Colonic mucosa (tissue), 4 donors: ENCODE measurements at regions of chr11 and their contacts with region 1.

Region 1: DNA sequence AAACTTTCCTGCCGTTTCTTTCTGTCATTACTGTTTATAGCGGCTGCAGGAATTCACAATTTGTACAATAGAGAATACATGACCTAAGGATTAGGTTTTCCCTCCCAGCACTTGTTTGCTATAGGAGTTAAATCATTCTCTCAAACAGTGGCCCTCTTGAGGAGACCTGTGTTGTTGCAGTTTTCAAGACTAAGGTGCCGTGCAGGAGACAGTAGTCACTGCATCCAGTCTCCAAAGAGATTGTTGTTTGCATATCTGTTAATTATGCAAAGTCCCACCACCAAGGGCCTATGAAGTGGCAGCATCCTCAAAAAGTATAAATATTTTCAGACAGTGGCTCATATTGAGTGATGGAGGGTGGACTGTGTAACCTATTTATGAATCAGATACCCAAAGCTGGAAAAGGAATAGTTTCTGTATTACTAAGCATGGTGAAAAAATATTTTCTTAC is 2.3 kb downstream of the PRSS23 start:
- DNase-seq: no peak
- H3K4me3 ChIP-seq: no peak overlapping the region
- H3K27ac ChIP-seq: no peak overlapping the region
- H3K4me1 ChIP-seq: no peaks in the 10 kb centered on the region
- H3K27me3 ChIP-seq: no peaks in the 10 kb centered on the region
- CTCF ChIP-seq: peak; percentile 45

Region 2: DNA sequence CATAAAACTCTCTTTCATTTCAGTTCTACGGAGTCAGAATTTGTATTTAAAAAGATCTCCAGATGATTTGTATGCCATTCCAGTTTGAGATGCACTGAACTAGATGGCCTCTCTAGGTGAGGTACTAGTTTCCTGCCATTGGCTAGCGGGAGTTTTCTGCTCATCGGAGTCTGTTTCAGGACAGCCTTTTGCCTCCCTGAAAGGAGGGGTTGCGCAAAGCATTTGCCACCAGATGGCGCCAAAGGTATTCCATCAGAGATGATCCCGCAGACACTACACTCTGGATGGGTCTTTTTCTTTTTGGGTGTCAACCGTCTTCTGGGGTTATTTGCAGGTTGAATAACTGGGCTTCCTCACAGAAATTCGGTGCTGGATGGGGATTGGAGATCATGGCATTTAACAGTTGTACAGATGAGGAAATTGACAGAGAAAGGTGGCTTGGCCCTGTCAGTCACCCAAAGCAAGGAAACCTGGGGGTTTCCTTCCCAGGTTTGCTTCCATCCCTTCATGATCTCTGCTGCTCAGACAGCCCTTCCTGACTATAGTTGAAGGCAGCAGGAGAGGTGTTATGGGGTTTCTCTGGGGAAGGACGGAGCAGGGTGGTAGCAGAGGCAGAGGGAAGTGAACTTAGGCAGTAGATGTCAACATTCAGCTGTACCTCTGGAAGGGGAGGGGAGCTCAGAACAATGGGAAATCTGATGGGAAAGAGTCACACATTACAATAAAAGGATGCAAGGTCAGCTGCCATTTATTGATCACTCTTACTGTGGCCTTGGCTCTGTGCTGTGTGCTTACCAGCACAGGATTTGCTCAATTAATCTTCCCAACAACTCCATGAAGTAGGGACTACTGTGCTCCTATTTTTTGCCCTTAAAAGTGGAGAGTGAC is 346.3 kb before region 1 on chr11:
- intact Hi-C with region 1: loop called (anchors 5 kb)
- DNase-seq: peak; percentile 89
- H3K4me3 ChIP-seq: no peak overlapping the region
- H3K27ac ChIP-seq: no peak overlapping the region
- H3K4me1 ChIP-seq: no peaks in the 10 kb centered on the region
- H3K27me3 ChIP-seq: no peaks in the 10 kb centered on the region
- CTCF ChIP-seq: peak; percentile 89

Region 3: DNA sequence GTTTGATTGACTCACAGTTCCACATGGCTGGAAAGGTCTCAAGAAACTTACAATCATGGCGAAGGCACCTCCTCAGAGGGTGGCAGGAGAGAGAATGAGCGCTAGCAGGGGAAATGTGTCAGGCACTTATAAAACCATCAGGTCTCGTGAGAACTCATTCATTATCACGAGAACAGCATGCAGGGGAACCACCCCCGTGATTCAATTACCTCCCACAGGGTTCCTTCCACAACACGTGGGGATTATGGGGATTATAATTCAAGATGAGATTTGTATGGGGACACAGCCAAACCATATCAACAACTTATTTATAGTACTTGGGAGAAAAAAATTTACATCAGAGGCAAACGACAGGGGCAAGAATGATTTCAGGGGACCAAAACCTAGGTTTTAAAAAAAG is 133.2 kb before region 1 on chr11:
- intact Hi-C with region 1: loop called (anchors 5 kb)
- DNase-seq: no peak
- H3K4me3 ChIP-seq: no peak overlapping the region
- H3K27ac ChIP-seq: no peak overlapping the region
- H3K4me1 ChIP-seq: peaks cover 3% of the 10 kb centered on the region
- H3K27me3 ChIP-seq: no peaks in the 10 kb centered on the region
- CTCF ChIP-seq: no peak